Activated CD4-positive, alpha-beta T cell treated with anti-CD3 and anti-CD28 coated beads, Interleukin-2, amount 10 ng/mL, durations not matched to agents 24 days and 14 days (primary cell): ENCODE measurements at regions of chr19 and their contacts with region 1.

Region 1: DNA sequence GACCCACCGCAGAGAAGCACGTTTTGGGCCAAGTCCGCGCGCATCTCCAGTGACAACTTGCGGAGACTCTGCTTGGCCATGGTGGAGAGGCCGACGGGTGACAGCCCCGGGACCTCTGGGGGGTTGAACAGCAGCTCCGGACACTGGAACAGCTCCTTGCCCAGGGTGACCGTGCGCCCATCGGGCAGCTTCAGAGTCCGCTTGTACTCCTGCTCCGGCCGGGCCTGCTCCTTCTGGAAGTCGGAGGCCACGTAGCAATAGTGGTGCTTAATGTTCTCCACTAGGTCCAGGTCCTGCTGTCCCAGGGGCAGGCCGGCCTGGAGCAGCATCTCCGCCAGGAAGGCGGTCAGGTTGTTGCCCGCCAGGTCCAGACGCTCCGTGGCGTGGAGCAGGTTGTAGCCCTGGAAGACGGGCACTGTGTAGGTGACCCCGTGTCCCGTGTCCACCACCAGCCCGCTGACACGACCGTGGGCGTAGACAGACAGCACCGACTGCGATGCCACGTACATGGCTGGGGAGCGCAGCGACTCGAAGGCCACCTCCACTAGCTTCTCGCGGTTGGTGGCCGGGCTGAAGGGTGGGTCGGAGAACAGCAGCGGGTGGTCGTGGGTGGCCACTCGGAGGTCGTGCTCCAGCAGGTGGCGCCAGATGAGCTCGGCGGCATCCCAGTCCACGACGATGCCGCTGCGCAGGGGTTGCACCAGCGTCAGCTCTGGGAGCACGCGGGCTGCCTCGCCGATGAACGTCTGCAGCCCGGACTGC is 743 bp downstream of the ACTL9 start:
- DNase-seq: peak; percentile 62
- H3K4me3 Mint-ChIP-seq: no peak overlapping the region
- H3K27ac Mint-ChIP-seq: no peak overlapping the region
- H3K4me1 Mint-ChIP-seq: peaks cover 49% of the 10 kb centered on the region
- H3K27me3 Mint-ChIP-seq: peaks cover 14% of the 10 kb centered on the region

Region 2: DNA sequence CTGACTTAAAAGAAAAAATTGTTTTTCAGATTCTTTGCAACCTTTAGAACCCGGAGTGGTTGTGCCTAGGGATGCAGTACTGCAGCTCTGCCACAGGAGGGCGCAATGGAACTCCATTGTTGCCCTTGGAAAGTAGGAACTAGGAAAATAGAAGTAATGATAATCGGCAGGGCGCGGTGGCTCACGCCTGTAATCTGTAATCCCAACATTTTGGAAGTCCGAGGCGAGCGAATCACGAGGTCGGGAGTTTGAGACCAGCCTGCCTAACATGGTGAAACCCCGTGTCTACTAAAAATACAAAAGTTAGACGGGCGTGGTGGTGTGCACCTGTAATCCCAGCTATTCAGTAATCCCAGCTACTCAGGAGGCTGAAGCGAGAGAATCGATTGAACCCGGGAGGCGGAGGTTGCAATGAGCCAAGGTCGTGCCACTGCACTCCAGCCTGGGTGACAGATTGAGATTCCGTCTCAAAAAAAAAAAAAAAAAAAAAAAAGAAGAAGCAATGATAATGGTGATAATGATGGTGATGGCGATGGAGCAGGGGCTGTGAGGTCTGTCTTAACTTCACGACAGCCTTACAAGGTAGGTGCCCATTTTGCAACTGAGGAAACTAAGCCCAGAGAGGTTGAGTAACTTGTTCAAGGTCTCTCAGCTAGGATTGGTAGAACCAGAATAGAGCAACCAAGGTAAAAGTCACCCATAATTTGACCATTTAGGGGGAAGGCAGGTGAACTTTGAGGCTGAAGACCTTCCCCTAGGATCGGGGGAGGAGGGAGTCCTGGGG is 81.8 kb before region 1 on chr19:
- intact Hi-C with region 1: loop called (anchors 1 kb)
- DNase-seq: peak; percentile 89
- H3K4me3 Mint-ChIP-seq: no peak overlapping the region
- H3K27ac Mint-ChIP-seq: no peak overlapping the region
- H3K4me1 Mint-ChIP-seq: peaks cover 4% of the 10 kb centered on the region
- H3K27me3 Mint-ChIP-seq: peaks cover 5% of the 10 kb centered on the region

Region 3: DNA sequence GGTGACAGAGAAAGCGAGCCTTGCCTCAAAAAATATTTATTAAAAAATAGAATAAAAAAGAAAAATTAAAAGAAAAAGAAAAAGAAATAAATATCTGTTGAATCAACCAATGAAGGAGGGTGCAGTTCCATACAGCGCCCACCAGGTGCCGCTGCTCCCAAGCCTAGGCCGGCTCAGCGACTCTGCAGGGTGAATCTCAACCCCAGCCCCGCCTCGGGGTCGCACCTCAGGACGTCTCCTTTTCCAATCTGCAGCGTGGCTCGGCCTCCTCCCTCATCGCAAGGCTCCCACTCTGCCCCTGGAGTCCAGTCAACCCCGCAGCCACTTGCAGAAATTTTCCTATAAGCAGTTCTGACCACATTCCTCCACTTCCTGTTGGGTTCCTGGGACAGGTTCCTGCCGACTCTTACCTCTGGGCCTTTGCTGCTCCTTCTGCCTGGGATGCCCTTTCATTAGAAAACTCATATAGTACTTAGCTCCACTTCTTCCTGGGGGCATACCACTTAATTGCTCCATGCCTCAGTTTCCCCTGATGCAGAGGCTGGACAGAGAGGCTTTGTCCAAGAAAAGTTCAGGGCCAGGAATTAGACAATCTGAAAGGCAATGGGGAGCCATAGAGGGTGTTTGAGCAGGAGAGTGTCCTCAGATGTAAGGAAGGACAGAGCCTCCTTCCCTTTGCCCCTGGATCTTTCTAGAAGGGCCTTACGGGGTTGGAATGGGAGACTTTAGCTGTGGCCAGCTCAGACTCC is 43.1 kb before region 1 on chr19:
- intact Hi-C with region 1: loop called (anchors 1 kb)
- DNase-seq: peak; percentile 88
- H3K4me3 Mint-ChIP-seq: peak overlapping the region; percentile 67
- H3K27ac Mint-ChIP-seq: peak overlapping the region; percentile 20
- H3K4me1 Mint-ChIP-seq: peaks cover 9% of the 10 kb centered on the region
- H3K27me3 Mint-ChIP-seq: peaks cover 3% of the 10 kb centered on the region

Region 4: DNA sequence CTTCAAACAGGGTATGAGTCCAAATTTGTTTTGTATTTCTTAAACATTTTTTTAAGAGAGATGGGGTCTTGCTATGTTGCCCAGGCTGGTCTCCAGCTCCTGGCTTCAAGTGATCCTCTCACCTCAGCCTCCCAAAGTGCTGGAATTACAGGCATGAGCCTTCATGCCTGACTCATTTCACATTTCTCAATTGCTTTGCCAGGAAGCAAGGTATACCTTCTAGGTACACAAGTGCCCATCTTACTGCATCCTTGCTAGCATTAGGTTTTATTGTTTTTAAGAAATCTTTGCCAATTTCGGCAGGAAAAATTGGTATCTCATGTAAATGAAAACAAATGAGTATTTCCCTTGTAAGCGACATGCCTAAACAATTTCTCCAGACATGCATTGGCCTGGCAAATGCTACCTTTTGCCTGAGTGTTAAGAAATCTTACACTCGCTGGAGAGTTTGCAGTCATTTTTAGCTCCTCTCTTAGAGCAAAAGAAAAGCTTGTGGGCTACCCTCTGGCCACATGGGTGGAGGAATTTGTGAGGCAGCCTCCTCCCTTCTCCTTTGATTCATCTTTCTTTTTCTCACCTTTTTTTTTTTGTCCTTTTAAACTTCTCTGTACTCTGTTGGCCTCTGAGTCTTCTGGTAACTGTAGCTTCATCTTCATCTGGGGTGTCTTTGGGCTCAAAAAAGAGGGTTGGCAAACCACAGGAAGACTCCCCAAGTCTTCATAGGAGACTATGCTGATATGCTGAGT is 32.2 kb before region 1 on chr19:
- intact Hi-C with region 1: loop called (anchors 5 kb)
- DNase-seq: peak; percentile 66
- H3K4me3 Mint-ChIP-seq: peak overlapping the region; percentile 4
- H3K27ac Mint-ChIP-seq: peak overlapping the region; percentile 61
- H3K4me1 Mint-ChIP-seq: peaks cover 37% of the 10 kb centered on the region
- H3K27me3 Mint-ChIP-seq: no peaks in the 10 kb centered on the region